Activated CD4-positive, alpha-beta T cell treated with anti-CD3 and anti-CD28 coated beads, Interleukin-2, amount 10 ng/mL, durations not matched to agents 24 days and 14 days (primary cell): ENCODE measurements at regions of chr18 and their contacts with region 1.

Region 1: DNA sequence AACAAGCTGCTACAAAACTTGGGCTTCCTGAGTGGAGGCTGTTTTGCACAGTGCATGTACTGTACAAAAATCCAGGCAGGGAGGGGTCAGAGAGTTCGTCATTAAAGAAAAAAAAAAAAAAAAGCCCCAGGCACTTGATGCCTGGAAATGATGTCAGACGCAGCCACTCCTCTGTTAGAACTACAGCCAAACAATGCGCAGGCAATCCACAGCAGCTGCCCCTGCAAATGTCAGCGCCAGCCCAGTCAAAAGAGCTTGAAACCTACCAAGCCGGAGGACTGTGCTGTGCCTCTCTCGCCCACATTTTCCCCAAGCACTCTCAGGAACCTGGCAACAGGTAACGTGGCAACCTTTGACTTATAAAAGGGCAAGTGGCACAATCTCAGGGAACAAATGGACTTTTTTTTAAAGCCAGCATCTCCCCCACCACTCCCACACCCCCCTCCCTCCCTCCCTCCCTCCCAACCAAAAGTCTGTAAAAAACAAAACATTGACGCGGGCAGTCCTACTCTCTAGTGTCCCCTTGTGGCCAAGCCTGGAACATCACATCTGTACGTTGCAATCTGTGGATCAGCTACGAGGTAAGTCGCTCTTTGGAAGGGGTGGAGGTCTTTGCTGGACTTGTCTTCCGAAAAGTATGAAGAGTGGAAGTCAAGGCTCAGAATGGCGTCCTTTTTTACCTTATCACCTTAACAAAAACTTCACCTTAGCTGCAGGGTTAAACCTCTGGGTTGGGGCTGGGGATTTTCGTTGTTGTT is 144.1 kb downstream of the TGIF1 start:
- DNase-seq: peak; percentile 96
- H3K4me3 Mint-ChIP-seq: peak overlapping the region; percentile 89
- H3K27ac Mint-ChIP-seq: peak overlapping the region; percentile 97
- H3K4me1 Mint-ChIP-seq: peaks cover 39% of the 10 kb centered on the region
- H3K27me3 Mint-ChIP-seq: no peaks in the 10 kb centered on the region

Region 2: DNA sequence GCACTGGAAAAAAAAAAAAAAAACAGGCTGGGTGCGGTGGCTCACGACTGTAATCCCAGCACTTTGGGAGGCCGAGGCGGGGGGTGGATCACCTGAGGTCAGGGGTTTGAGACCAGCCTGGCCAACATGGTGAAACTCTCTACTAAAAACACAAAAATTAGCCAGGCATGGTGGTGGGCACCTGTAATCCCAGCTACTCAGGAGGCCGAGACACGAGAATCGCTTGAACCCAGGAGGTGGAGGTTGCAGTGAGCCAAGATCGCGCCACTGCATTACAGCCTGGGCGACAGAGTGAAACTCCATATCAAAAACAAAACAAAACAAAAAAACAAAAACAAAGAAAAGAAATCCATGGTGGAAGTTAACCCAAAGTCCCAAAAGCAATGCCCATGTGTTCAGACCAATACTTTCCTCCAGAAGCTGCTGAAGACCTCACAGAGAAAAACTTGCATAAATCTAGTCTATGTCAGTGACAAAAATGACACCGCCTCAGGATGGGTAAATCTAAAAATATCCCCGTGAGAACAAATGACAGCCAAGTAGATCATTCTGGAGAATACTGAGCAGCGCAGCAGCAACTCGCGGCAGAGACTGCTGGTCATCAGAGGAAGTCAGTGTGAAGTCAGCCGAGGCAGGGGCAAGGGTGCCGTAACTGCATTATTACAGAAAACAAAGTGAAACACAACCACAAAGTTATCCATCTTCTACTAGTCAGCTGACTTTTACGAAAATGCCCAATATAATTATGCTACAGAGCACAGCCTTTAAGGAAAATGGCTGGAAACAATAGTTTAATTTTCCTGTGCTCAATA is 622.1 kb before region 1 on chr18:
- intact Hi-C with region 1: loop called (anchors 5 kb)
- DNase-seq: peak; percentile 92
- H3K4me3 Mint-ChIP-seq: peak overlapping the region; percentile 83
- H3K27ac Mint-ChIP-seq: peak overlapping the region; percentile 92
- H3K4me1 Mint-ChIP-seq: peaks cover 80% of the 10 kb centered on the region
- H3K27me3 Mint-ChIP-seq: no peaks in the 10 kb centered on the region

Region 3: DNA sequence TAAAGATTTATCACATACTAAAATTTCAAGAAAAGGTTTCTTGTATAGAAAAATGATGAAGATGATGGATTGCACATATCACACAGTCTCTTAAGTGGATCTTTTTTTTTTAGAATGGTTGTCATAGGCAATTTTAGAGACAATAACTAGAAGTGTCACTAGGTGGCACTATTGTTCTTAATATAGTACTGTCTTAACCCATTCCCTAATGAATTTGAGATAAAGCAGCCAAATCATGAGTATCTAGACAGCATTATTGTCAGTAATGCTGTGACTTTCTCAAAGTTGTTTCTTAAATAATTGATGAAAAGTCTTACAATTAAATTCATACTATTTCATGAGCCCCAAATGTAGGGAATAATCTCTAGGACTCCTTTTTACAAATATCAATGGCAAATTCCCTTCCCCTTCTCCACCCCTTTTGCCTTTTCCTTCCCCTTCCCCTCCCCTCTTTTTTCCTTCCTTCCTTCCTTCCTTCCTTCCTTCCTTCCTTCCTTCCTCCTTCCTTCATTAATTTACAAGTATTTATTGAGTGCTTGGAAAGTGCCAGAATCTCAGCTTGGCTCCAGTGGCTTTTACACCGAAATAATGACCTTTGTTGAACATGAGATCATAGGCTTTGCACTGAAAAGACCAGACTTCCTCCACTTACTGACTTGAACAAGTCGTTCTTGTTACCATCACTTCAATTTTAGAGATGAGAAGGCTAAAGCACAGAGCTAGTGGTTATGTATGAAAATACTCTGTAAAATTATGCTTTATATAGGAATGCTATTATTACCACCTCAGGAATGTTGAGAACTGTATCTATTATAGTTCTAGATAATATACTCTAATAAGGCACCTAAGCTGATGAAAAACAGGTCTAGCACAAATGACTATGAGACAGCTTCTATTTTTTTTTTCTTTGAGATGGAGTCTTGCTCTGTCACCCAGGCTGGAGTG is 312.4 kb before region 1 on chr18:
- intact Hi-C with region 1: loop called (anchors 1 kb)
- DNase-seq: peak; percentile 79
- H3K4me3 Mint-ChIP-seq: no peak overlapping the region
- H3K27ac Mint-ChIP-seq: no peak overlapping the region
- H3K4me1 Mint-ChIP-seq: peaks cover 4% of the 10 kb centered on the region
- H3K27me3 Mint-ChIP-seq: peaks cover 3% of the 10 kb centered on the region

Region 4: GRCh38 chr18:3380384-3380961 is 213.6 kb before region 1 on chr18:
- intact Hi-C with region 1: loop called (anchors 2 kb)
- DNase-seq: no peak
- H3K4me3 Mint-ChIP-seq: no peak overlapping the region
- H3K27ac Mint-ChIP-seq: no peak overlapping the region
- H3K4me1 Mint-ChIP-seq: peaks cover 2% of the 10 kb centered on the region
- H3K27me3 Mint-ChIP-seq: peaks cover 6% of the 10 kb centered on the region

Region 5: GRCh38 chr18:3541549-3542386 is 52.3 kb before region 1 on chr18:
- intact Hi-C with region 1: loop called (anchors 2 kb)
- DNase-seq: no peak
- H3K4me3 Mint-ChIP-seq: no peak overlapping the region
- H3K27ac Mint-ChIP-seq: peak overlapping the region; percentile 75
- H3K4me1 Mint-ChIP-seq: peaks cover 14% of the 10 kb centered on the region
- H3K27me3 Mint-ChIP-seq: peaks cover 6% of the 10 kb centered on the region

Region 6: DNA sequence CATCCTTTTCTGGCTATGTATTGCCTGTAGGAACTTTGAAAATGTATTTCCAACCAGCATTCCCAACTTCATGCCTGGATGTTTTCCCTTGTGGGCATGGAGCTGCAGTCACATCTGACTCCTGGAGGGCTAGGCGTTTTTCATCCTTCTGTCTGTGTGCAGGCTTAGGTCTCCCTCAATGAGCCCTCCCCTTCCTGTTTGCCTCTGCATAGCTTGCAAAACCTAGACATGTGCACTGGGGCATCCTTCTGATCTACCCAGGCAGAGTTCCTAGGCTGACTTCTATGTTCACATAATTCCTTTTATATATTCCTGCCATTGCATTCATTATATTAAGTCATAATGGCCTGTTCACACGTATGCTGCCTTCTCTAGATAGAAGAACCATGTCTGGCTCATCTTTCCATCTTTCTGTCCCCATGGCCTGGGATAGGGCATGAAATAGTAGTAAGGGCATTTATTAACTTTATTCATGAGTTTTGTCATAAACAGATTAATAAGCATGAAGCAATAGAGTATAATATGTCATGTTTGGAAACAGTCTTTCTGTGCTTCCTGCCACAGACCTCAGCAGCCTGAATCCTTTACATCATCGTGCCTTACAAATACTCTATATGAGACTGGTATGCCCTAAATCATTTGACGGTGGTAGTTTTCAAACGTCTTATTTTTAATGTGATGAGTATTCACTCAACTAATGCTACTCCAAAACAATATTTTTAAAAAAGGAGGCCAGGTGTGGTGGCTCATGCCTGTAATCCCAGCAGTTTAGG is 51.5 kb after region 1 on chr18:
- intact Hi-C with region 1: loop called (anchors 1 kb)
- DNase-seq: no peak
- H3K4me3 Mint-ChIP-seq: no peak overlapping the region
- H3K27ac Mint-ChIP-seq: no peak overlapping the region
- H3K4me1 Mint-ChIP-seq: peaks cover 32% of the 10 kb centered on the region
- H3K27me3 Mint-ChIP-seq: no peaks in the 10 kb centered on the region